Breast epithelium (tissue), 4 donors: ENCODE measurements at regions of chr12 and their contacts with region 1.

Region 1: DNA sequence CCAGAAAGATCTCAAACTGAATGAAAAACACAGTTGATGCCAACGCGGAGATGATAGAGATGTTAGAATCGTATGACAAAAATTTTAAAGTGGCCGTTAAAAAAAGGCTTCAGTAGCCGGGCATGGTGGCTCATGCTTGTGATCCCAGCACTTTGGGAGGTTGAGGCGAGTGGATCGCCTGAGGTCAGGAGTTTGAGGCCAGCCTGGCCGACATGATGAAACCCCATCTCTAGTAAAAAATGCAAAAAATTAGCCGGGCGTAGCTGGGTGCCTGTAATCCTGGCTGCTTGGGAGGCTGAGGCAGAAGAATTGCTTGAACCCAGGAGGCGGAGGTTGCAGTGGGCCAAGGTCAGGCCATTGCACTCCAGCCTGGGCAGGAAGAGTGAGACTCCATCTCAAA is 5.4 kb upstream of the ACVRL1 start:
- DNase-seq: no peak
- H3K4me3 ChIP-seq: no peak overlapping the region
- H3K27ac ChIP-seq: no peak overlapping the region
- H3K4me1 ChIP-seq: no peaks in the 10 kb centered on the region
- H3K27me3 ChIP-seq: no peaks in the 10 kb centered on the region
- CTCF ChIP-seq: no peak
- POLR2A ChIP-seq: no peak

Region 2: GRCh38 chr12:51441583-51441982 is 460.3 kb before region 1 on chr12:
- intact Hi-C with region 1: no loop called
- DNase-seq: no peak
- H3K4me3 ChIP-seq: no peak overlapping the region
- H3K27ac ChIP-seq: no peak overlapping the region
- H3K4me1 ChIP-seq: no peaks in the 10 kb centered on the region
- H3K27me3 ChIP-seq: no peaks in the 10 kb centered on the region
- CTCF ChIP-seq: no peak
- POLR2A ChIP-seq: no peak

Region 3: DNA sequence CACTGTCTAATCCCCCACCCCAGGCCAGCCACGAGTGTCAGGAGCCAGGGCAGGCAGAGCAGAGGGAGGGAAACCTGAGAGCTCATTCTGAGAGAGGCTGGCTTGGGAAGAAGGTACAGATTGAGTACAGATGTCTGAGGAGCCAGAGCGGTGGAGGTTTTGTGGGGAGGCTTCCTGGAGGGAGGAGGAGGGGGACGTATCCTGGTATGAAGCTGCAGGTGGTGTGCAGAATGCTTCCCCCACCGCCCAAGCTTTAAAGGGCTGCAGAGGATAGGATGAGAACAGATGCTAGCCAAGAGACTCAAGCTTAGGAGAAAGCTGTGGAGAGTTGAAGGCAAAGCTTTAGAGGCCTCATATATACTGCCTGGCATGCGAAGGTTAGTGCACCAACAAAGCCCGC is 101.7 kb after region 1 on chr12:
- intact Hi-C with region 1: loop called (anchors 2 kb)
- DNase-seq: no peak
- H3K4me3 ChIP-seq: no peak overlapping the region
- H3K27ac ChIP-seq: no peak overlapping the region
- H3K4me1 ChIP-seq: peaks cover 0 to 2% of the 10 kb centered on the region in 2 donors
- H3K27me3 ChIP-seq: no peaks in the 10 kb centered on the region
- CTCF ChIP-seq: no peak
- POLR2A ChIP-seq: no peak